ENCODE measurements at regions of chr4 and their contacts with region 1.

Region 1: GRCh38 chr4:158253350-158253980 is 43.2 kb downstream of the TMEM144 start:
- DNase-seq: no peak
- ATAC-seq: peak; percentile 78

Region 2: DNA sequence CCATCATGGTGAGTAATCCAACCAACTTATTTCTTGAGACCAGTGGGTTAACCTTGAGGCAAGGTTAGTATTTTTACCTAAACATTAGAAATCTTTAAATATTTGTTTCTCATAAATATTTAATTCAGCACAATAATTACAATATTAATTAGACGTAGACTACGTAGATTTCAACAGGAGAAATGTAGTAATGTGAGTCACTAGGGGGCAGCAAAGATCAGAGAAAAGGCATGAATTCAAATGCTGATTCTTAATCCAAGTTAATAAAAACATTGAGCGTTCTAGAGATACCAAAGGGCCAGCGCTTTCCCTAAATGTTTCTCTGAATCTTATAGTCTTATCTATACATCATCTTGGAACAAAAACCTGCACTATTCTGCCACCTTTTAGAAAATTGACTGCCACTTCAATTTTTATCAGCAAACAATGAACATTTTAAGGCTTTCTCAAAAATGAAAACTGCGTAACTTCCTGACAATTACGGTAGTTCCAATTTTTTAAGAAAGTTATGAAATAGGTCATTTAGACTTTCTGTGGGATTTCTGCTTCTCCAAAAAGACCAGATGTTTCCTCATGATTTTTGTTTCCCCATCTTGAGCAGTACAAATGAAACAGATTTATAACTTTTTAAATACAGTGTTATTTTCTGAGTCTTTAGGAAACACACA is 261.3 kb before region 1 on chr4:
- intact Hi-C with region 1: loop called (anchors 5 kb)
- DNase-seq: no peak
- ATAC-seq: peak; percentile 92

Region 3: DNA sequence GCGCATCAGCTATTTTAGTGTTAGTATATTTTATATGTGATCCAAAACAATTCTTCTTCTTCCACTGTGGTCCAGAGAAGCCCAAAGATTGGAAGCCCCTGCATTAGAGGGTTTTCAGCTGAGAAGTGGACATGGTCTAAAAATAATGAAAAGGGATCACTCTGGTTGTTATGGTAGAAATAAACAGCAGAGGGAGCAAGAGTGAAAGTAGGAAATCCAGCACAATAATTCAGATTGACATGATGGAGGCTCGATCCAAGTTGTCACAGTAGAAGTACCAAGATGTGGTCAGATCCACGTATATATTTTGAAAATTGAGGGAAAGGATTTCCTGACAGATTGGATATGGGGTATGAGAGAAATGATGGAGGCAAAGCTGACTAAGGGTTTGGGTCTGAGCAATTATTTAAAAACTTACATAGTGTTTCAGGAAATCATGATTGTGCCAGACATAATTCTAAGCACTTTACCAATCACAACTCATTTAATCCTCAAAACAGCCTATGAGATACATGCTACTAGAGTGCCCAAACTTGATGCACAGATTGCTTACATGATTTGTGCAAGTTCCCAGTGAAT is 60.2 kb before region 1 on chr4:
- intact Hi-C with region 1: loop called (anchors 2 kb)
- DNase-seq: no peak
- ATAC-seq: peak; percentile 70

Region 4: DNA sequence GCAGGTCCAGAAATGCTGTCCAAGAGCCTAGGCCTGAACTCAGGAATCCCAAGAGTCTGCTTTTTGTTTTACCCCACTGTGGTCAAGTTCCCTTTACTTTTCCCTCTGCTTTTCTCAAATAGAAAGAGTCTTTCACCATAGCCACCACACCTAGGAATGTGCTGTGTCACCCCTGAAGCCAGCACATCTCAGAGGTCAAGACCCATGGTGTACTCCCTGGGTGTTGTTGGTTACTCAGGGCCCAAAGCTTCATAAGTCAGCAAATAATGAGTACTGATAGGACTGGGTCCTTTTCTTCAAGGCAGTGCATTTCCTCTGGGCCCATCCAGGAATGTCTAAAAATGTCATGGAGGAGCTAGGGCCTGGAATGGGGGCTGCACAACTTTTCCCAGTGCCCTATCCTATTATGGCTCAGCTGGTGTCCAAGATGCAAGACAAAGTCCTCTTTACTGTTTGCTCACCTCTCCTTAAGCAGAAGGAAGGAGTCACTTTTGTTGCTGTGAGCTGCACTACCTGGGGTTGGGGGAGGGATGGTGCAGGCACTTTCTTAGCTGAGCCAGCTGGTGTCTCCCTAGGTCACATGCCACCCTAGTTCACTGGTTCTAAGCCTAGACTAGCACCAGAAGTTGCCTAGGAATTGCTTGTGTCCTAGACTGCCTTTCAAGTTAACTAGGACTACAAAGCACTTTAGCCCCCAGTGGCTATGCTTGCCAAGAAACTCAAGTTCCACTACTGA is 205.8 kb after region 1 on chr4:
- intact Hi-C with region 1: no loop called
- DNase-seq: no peak
- ATAC-seq: no peak

Region 5: GRCh38 chr4:158624889-158625478 is 371.5 kb after region 1 on chr4:
- intact Hi-C with region 1: loop called (anchors 2 kb)
- DNase-seq: no peak
- ATAC-seq: peak; percentile 86

Measured in left ventricle myocardium superior (tissue), 1 donor.